Aorta (tissue), 5 donors: ENCODE measurements at regions of chr9 and their contacts with region 1.

Region 1: DNA sequence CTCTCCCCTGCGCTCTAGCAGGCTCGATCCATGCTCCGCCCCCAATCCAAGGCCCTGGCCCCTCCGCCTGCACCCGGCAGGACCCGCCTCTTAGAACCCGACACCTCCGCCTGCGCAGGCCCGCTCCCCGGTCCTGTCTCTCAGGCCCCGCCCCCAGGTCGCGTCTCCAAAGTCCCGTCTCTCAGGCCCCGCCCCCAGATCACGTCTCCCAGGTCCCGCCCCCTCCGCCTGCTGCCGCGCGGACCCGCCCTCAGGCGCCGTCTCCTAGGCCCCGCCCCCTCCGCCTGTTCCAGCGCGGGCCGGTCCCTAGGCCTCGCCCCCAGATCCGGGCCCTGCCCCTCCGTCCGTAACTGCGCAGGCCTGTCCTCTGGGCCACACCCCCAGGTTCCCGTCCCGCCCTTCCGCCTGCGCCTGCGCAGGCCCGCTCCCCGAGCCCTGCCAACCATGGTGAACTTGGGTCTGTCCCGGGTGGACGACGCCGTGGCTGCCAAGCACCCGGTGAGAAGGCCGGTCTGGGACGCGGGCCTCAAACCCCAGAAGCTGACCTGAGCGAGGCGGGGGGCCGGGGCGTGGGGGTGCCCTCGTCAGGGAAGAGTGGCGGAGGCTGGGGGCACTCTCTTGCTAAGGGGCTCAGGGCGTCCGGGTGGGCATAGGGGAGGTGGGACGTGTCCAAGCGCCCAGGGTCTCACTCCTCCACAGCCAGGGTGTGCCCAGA is at the start of gene TMEM141:
- DNase-seq: peak; percentile 100
- ATAC-seq: peak; percentile 99
- H3K4me3 ChIP-seq: peak within 1 kb of the TSS; percentile 23 to 40
- H3K27ac ChIP-seq: peak within 1 kb of the TSS in 1 of 2 donors; percentile 7
- H3K4me1 ChIP-seq: no peaks in the 10 kb centered on the region
- H3K27me3 ChIP-seq: no peaks in the 10 kb centered on the region
- total RNA-seq, gene TMEM141: 26.6 to 27.0 TPM

Region 2: DNA sequence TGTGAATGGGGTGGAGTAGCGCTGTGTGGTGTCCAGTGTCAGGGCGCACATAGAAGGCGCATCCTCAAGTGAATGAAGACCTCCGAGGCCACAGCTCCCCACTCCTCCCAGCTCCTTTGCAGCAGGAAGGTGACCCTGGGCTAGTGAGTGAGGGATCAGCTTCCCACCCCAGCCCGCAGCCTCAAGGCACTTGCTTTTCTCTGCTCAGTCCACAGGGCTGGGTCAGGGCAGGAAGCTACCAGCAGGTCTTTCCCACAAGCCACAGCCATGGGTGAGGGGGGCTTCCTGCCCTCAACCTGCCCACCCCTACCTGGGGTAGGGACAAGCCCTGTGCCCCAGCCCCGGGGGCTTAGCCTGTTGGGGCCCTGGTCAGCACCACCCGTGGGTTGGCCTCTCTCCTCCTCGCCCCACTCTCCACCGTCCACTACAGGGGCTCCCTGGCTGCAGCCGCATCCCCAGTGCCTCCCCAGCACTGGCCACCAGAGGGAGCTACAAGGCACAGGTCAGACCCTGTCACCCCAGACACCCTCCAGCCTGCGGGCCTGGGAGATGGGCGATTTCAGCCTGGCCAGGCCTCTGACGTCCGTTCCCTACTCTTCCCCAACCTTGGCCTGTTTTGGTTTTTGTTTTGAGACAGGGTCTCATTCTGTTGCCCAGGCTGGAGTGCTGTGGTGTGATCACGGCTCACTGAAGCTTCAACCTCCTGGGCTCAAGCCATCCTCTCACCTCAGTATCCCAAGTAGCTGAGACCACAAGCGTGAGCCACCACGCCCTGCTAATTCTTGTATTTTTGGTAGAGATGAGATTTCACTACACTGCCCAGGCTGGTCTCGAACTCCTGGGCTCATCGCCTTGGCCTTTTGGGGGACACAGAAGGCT is 238.2 kb after region 1 on chr9:
- intact Hi-C with region 1: loop called (anchors 2 kb)
- DNase-seq: peak; percentile 89 to 92
- ATAC-seq: peak; percentile 79
- H3K4me3 ChIP-seq: no peak overlapping the region
- H3K27ac ChIP-seq: no peak overlapping the region
- H3K4me1 ChIP-seq: no peaks in the 10 kb centered on the region
- H3K27me3 ChIP-seq: no peaks in the 10 kb centered on the region

Region 3: DNA sequence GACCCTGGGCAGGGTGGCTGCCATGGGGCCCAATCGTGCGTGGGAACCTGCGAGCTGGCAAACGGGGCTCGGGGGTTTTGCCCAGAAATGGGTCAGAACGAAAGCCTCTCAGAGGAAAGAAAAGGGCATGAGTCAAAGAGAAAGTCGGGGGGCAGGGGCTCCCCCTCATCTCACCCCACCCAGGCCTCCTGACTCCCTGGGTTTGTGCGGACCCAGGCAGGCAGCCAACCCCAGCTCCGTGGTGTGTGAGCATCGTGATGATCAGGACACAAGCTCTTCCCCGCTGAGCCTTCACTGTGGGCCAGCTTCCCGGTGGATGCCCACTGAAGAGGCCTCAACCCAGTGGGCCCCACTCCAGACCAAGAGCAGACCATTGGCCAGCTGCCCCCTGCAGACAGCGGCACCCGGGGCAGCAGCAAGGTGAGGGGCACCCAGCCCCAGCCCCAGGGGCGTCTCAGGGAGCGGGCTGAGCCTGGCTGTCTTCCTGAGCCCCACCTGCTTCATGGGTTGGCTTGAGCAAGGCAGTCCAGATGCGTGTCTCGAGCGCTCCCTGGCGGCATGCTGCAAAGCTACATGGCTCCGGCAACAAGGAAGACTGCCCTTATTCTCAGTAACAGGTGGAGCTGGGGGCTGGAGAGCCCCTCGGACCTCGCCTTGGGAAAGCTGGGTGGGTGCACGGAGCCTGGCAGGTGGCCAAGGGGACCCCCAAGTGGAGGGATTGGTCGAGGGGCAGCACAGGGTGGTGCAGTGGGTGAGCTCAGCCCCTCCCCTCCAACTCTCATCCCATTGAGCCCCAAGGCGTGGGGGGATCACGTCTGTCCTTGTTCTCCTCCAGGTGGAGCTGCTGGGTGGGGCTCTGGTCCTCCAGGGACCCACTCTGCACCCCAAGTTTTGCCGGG is 244.0 kb after region 1 on chr9:
- intact Hi-C with region 1: loop called (anchors 1 to 2 kb)
- DNase-seq: peak; percentile 89 to 94
- ATAC-seq: peak; percentile 83
- H3K4me3 ChIP-seq: no peak overlapping the region
- H3K27ac ChIP-seq: no peak overlapping the region
- H3K4me1 ChIP-seq: no peaks in the 10 kb centered on the region
- H3K27me3 ChIP-seq: no peaks in the 10 kb centered on the region

Region 4: DNA sequence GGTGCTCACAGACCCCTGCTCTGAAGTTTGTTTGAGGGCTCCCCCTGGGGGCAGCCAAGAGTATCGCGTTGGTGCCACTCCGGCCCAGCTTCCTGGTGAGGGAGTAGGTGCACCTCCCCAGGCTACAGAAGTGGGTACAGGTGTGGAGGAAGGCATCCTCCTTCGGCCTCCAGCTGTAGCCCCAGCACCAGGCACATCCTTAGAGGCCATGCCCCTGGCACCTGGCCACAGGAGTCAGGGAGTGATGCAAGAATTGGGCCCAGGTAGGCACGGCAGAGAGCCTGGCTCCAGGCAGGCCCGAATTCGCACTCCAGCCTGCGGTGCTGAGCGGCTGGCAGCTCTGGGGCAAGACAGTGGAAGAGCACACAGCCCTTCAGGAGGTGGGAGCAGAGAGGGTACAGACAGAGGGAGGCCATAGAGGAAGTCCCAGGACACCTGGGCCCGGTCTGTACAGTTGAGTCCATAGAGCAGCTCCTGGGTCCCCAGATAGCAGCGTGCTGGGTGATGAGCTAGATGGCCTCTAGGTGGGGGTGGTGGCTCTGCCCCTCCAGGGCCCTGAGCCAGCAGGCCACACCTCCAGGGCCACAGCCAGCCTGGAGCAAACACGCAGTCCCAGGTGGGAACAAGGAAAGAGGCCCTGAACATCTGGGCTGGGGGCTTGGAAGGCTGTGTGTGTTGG is 276.9 kb after region 1 on chr9:
- intact Hi-C with region 1: loop called (anchors 10 kb)
- DNase-seq: peak; percentile 84 to 90
- ATAC-seq: no peak
- H3K4me3 ChIP-seq: no peak overlapping the region
- H3K27ac ChIP-seq: no peak overlapping the region
- H3K4me1 ChIP-seq: no peaks in the 10 kb centered on the region
- H3K27me3 ChIP-seq: no peaks in the 10 kb centered on the region